ENCODE measurements at regions of chr21 and their contacts with region 1.

Region 1: GRCh38 chr21:36976882-36977651 is 10.6 kb upstream of the HLCS start:
- DNase-seq: peak; percentile 56
- ATAC-seq: peak; percentile 65
- H3K4me3 Mint-ChIP-seq: no peak overlapping the region
- H3K27ac Mint-ChIP-seq: peak overlapping the region; percentile 32
- H3K4me1 Mint-ChIP-seq: peaks cover 28% of the 10 kb centered on the region
- H3K27me3 Mint-ChIP-seq: peaks cover 2% of the 10 kb centered on the region

Region 2: DNA sequence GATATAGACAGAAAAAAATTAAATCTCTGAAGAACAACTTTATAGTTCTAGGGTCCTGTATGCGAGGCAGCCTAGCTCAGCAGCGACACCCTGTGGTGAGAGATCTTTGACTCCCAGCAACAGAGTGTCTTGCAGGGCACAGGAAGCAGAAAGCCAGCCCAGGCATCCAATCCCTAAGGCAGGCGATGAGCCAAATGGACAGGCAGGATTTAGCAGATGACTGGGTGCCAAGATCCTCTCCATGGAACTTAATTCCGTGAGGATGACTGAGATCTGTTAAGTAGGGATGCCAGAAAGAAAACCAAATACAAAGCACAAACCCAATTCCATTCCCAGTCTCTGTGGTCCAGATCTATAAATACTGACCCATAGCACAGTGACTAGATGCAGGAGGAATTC is 49.3 kb before region 1 on chr21:
- CTCF ChIA-PET with region 1: no interaction called
- POLR2A ChIA-PET with region 1: no interaction called
- DNase-seq: peak; percentile 83
- ATAC-seq: peak; percentile 65
- H3K4me3 Mint-ChIP-seq: no peak overlapping the region
- H3K27ac Mint-ChIP-seq: no peak overlapping the region
- H3K4me1 Mint-ChIP-seq: no peaks in the 10 kb centered on the region
- H3K27me3 Mint-ChIP-seq: no peaks in the 10 kb centered on the region

Region 3: GRCh38 chr21:36966066-36966820 is 10.8 kb before region 1 on chr21 and contains the start of gene HLCS:
- CTCF ChIA-PET with region 1: interaction called, 24 read pairs
- POLR2A ChIA-PET with region 1: interaction called, 6 read pairs
- DNase-seq: peak; percentile 80
- ATAC-seq: peak; percentile 93
- H3K4me3 Mint-ChIP-seq: peak within 1 kb of the TSS; percentile 88
- H3K27ac Mint-ChIP-seq: peak within 1 kb of the TSS; percentile 90
- H3K4me1 Mint-ChIP-seq: peaks cover 21% of the 10 kb centered on the region
- H3K27me3 Mint-ChIP-seq: no peaks in the 10 kb centered on the region
- total RNA-seq, gene HLCS: 15.5 to 16.8 TPM

Region 4: GRCh38 chr21:37009740-37010341 is 32.8 kb after region 1 on chr21:
- CTCF ChIA-PET with region 1: interaction called, 21 read pairs
- POLR2A ChIA-PET with region 1: no interaction called
- DNase-seq: peak; percentile 83
- ATAC-seq: peak; percentile 91
- H3K4me3 Mint-ChIP-seq: peak overlapping the region; percentile 59
- H3K27ac Mint-ChIP-seq: no peak overlapping the region
- H3K4me1 Mint-ChIP-seq: peaks cover 19% of the 10 kb centered on the region
- H3K27me3 Mint-ChIP-seq: peaks cover 33% of the 10 kb centered on the region

Region 5: GRCh38 chr21:37055271-37055855 is 78.3 kb after region 1 on chr21:
- CTCF ChIA-PET with region 1: no interaction called
- POLR2A ChIA-PET with region 1: no interaction called
- DNase-seq: no peak
- ATAC-seq: no peak
- H3K4me3 Mint-ChIP-seq: no peak overlapping the region
- H3K27ac Mint-ChIP-seq: no peak overlapping the region
- H3K4me1 Mint-ChIP-seq: no peaks in the 10 kb centered on the region
- H3K27me3 Mint-ChIP-seq: peaks cover 15% of the 10 kb centered on the region